ENCODE measurements at regions of chr11 and their contacts with region 1.

Region 1: DNA sequence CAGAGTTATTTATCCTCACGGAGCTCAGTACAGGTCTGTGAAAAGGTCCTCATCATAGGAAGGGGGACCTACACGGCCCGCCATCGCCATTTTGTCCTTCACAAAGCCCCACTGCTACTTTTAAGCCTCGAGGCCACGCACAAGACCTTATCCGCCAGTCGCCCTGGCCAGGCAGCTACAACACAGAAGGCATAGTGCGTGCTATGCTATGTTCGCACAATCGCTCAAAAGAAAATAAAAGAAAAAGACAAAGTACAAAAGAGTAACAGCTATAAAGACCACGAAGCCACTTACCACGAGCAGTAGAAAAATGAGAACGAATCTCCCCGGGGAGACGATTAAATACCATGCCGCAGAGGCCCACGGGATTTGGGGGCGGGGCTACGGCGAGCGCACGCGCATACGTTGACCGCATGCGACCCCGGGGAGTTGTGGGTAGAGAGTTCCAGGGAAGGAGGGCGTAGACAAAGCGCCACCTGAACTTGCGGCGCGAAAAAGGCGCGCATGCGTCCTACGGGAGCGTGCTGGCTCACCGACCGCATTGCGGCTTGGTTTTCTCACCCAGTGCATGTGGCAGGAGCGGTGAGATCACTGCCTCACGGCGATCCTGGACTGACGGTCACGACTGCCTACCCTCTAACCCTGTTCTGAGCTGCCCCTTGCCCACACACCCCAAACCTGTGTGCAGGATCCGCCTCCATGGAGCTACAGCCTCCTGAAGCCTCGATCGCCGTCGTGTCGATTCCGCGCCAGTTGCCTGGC is 16.4 kb upstream of the WDR74 start:
- DNase-seq: peak; percentile 90
- CTCF ChIP-seq: no peak

Region 2: DNA sequence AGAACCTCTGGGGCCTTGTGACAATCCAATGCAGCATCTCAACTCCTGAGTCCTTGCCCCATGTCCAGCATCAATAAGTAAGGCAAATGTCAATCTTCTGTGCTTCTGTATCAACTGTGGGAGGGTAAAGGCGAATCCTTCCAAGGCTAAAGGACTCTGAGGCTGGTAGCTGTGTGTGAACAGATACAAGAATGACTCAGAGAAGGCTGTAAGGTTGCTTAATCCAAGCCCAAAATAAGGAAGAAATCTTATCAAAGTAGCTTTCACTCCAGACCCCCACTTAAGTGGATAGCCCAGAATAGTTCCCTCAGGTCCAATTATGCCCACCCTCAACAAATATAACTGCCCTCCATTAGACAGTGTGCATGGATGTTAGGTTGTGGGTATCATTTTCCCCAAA is 465.0 kb before region 1 on chr11:
- in situ Hi-C with region 1: no loop called
- DNase-seq: no peak
- CTCF ChIP-seq: no peak

Region 3: DNA sequence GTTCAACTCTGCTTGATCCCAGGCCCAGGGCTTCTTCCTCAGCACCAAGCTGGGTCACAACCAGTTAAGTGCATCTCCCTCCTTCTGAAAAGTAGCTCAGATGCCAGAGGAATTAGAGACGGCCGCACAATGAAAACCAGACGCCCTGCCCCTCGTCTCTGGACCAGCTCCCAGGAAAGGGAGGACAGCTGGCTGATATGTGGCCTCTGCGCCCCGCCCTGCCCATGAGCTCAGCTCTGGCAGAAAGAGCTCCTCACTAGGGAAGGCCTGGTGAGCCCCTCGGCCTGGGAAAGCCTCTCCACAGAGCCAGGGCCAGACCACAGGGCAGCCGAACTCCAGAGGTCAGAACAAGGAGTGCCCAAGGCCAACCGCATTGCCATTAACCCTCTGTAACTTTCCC is 455.0 kb before region 1 on chr11:
- in situ Hi-C with region 1: loop called (anchors 25 kb)
- DNase-seq: no peak
- CTCF ChIP-seq: no peak

Region 4: GRCh38 chr11:62753736-62754603 is 101.8 kb before region 1 on chr11 and contains the start of gene ZBTB3:
- in situ Hi-C with region 1: no loop called
- DNase-seq: peak; percentile 94
- CTCF ChIP-seq: no peak

Region 5: DNA sequence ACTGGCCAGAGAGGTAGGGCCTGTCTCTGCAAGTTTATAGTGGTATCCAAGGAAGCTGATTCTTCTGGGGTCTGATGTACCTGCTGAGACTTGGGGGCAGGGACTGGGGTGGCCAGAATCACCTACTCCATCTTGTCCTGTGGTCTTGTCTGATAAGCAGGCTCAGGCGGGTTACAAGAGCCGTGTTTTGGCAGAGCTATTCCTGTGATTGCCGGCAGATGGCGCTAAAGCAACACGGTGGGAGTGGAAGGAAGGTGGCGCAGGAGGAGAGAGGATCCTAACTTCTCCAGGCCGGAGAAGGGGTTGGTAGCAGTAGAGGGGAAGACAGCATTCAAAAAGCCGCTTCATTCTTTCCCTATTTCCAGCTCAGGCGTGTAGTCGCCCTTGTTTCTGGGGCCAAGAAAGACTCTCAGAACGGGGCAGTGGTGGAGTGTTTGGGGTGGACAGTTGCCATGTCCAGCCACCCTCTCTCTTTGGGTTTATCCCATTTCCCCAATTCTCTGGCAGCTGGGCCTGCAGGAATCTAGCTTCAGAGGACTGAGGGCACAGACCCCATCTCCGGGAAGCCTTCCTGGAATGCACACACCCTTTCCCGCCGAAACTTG is 50.3 kb after region 1 on chr11:
- in situ Hi-C with region 1: no loop called
- DNase-seq: peak; percentile 85
- CTCF ChIP-seq: peak; percentile 98

Region 6: GRCh38 chr11:63042596-63042995 is 186.8 kb after region 1 on chr11:
- in situ Hi-C with region 1: no loop called
- DNase-seq: no peak
- CTCF ChIP-seq: no peak

Measured in GM13977 (cell line).